ENCODE measurements at regions of chr7 and their contacts with region 1.

Region 1: GRCh38 chr7:101077303-101078089 is 7.8 kb upstream of the TRIM56 start:
- DNase-seq: peak; percentile 88
- ATAC-seq: peak; percentile 91
- H3K4me3 ChIP-seq: no peak overlapping the region
- H3K4me3 Mint-ChIP-seq: peak overlapping the region; percentile 4
- H3K27ac ChIP-seq: peak overlapping the region; percentile 24 to 63
- H3K27ac Mint-ChIP-seq: peak overlapping the region; percentile 18
- H3K4me1 ChIP-seq: peaks cover 7 to 10% of the 10 kb centered on the region in 2 donors
- H3K4me1 Mint-ChIP-seq: peaks cover 9% of the 10 kb centered on the region
- H3K27me3 ChIP-seq: no peaks in the 10 kb centered on the region
- H3K27me3 Mint-ChIP-seq: peaks cover 14% of the 10 kb centered on the region
- CTCF ChIP-seq: peak; percentile 81

Region 2: GRCh38 chr7:100803398-100804233 is 273.9 kb before region 1 on chr7:
- CTCF ChIA-PET with region 1: no interaction called
- POLR2A ChIA-PET with region 1: no interaction called
- intact Hi-C with region 1: loop called (anchors 5 kb)
- DNase-seq: peak; percentile 90
- ATAC-seq: peak; percentile 98
- H3K4me3 ChIP-seq: peak overlapping the region in 4 of 5 experiments; percentile 54 to 65 (median 56)
- H3K4me3 Mint-ChIP-seq: peak overlapping the region; percentile 86
- H3K27ac ChIP-seq: peak overlapping the region; percentile 84 to 94
- H3K27ac Mint-ChIP-seq: peak overlapping the region; percentile 86
- H3K4me1 ChIP-seq: peaks cover 28 to 35% of the 10 kb centered on the region in 2 donors
- H3K4me1 Mint-ChIP-seq: peaks cover 38% of the 10 kb centered on the region
- H3K27me3 ChIP-seq: no peaks in the 10 kb centered on the region
- H3K27me3 Mint-ChIP-seq: no peaks in the 10 kb centered on the region
- CTCF ChIP-seq: no peak

Region 3: GRCh38 chr7:100889761-100890634 is 187.5 kb before region 1 on chr7:
- CTCF ChIA-PET with region 1: interaction called, 5 read pairs
- POLR2A ChIA-PET with region 1: interaction called, 9 read pairs
- intact Hi-C with region 1: loop called (anchors 1 kb)
- DNase-seq: peak; percentile 94
- ATAC-seq: peak; percentile 82
- H3K4me3 ChIP-seq: peak overlapping the region in 4 of 5 experiments; percentile 57 to 80 (median 72)
- H3K4me3 Mint-ChIP-seq: peak overlapping the region; percentile 87
- H3K27ac ChIP-seq: no peak overlapping the region
- H3K27ac Mint-ChIP-seq: peak overlapping the region; percentile 82
- H3K4me1 ChIP-seq: peaks cover 43 to 54% of the 10 kb centered on the region in 2 donors
- H3K4me1 Mint-ChIP-seq: peaks cover 48% of the 10 kb centered on the region
- H3K27me3 ChIP-seq: peaks cover 0 to 46% (median 12%) of the 10 kb centered on the region in 4 experiments
- H3K27me3 Mint-ChIP-seq: peaks cover 22% of the 10 kb centered on the region
- CTCF ChIP-seq: no peak

Region 4: GRCh38 chr7:101126651-101127280 is 49.3 kb after region 1 on chr7 and contains the start of gene SERPINE1:
- CTCF ChIA-PET with region 1: interaction called, 3 read pairs
- POLR2A ChIA-PET with region 1: interaction called, 3 read pairs
- intact Hi-C with region 1: loop called (anchors 5 kb)
- DNase-seq: peak; percentile 33
- ATAC-seq: peak; percentile 53
- H3K4me3 ChIP-seq: peak within 1 kb of the TSS in 2 of 5 experiments; percentile 1
- H3K4me3 Mint-ChIP-seq: peak within 1 kb of the TSS; percentile 82
- H3K27ac ChIP-seq: no peak within 1 kb of the TSS
- H3K27ac Mint-ChIP-seq: peak within 1 kb of the TSS; percentile 75
- H3K4me1 ChIP-seq: peaks cover 24% of the 10 kb centered on the region in 2 donors
- H3K4me1 Mint-ChIP-seq: peaks cover 46% of the 10 kb centered on the region
- H3K27me3 ChIP-seq: peaks cover 0 to 22% (median 7%) of the 10 kb centered on the region in 4 experiments
- H3K27me3 Mint-ChIP-seq: peaks cover 38% of the 10 kb centered on the region
- CTCF ChIP-seq: no peak
- total RNA-seq, gene SERPINE1: 0.07 TPM in 1 of 2 replicates, not detected in the other